ENCODE measurements at regions of chr22 and their contacts with region 1.

Region 1: DNA sequence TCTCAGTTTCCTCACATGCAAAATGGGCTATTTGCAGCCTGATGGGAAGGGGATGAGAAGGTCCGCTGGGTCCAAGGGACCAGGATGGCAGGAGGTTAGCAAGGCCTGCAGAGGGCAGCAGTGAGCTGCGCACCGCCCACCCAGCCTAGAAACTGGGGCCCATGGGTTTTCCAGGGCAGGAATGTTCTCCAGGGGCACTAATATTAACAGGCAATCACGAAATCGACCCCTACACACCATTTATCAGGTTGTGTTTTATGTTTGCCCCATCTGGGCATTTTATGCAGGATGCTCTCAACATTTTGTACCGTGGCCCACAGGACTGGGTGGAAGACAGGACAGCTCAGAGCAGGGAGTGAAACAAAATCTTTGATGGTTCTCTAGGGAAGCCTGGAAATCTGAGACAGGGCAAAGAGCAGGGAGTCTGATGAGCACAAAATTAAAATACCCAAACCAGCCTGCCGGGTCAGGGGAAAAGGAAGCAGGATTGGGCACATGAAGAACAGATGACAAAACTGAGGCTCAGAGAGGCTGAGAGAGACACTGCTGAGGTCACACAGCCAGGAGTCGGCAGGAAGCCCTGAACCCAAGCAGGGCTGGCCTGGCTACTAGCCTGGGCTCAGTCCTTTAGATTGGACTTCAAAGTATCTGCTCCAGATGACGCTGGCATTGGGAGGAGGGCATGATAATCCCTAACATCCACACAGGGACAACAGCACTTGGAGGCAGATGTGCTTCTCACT is 1.6 kb upstream of the BCR start:
- DNase-seq: peak; percentile 18 to 26
- ATAC-seq: peak; percentile 26 to 44
- H3K4me3 ChIP-seq: no peak overlapping the region
- H3K27ac ChIP-seq: peak overlapping the region in 1 of 4 donors; percentile 57
- H3K4me1 ChIP-seq: peaks cover 30 to 41% of the 10 kb centered on the region in 2 donors
- H3K27me3 ChIP-seq: no peaks in the 10 kb centered on the region
- CTCF ChIP-seq: peak; percentile 88 to 97 (median 94)
- POLR2A ChIP-seq: no peak

Region 2: DNA sequence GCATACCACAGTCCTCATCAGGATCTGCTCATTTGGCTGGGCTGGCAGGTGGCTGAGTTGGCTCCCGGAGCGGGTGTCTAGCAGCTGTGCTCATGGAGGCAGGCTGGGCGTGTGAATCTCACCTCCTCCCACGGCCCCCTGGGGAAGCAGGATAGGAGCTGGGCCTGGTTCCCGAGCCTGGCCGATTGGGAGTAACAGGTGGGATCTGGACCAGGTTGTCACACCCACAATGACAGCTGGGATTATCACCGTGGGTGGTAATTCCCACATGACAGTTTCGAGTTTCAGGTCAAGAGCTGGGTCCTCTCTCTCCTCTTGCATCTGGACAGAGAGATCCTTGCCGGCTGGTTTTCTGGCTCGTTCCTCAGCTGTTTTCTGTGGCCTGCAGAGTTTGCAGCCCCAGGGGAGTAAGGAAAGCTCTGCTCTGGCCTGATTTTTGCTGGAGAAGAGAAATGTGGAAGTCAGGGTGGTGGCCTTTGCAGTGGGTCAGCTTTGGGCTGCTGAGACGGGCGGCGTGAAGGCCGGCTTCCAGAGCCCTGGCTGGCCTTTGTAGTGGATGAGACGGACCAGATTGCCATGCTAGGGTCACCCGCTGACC is 58.6 kb after region 1 on chr22:
- in situ Hi-C with region 1: no loop called
- intact Hi-C with region 1: loop called (anchors 5 kb)
- DNase-seq: peak; percentile 66 to 68
- ATAC-seq: peak; percentile 89 to 96
- H3K4me3 ChIP-seq: no peak overlapping the region
- H3K27ac ChIP-seq: peak overlapping the region in 1 of 4 donors; percentile 23
- H3K4me1 ChIP-seq: peaks cover 28 to 29% of the 10 kb centered on the region in 2 donors
- H3K27me3 ChIP-seq: peaks cover 2 to 24% (median 10%) of the 10 kb centered on the region in 3 donors
- CTCF ChIP-seq: no peak
- POLR2A ChIP-seq: no peak

Region 3: DNA sequence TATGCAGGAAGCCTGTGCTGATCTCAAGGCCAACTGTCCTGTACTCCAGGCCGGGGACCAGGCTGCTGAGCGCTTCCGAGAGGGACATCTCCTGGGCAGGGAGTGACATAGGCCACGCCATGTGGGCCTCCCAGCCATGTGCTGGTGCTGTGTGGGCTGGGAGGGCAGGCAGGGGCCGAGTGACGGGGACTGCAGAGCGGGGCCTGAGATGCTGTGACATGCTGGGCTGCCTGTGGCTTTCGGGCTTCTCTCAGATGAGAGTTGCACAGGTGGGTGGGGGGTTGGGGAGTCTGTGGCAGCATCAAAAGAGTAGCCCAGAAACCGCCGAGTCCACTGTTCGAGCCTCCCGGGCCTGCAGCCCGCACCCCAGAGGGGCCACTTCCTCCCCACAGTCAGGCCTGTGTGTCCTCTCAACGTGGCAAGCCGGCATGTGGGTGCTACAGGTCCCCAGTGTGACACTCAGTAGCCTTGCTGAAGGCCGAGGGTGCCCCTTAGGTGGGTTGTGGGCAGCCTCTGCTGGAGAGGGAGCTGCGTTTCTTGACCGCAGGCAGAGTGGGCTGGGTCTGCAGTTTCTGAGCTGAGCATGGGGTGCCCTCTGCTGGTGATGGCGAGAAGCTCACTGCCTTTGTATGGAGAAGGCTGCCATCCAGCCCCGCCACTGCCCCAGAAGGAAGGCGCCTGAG is 102.9 kb after region 1 on chr22:
- in situ Hi-C with region 1: loop called (anchors 5 kb)
- intact Hi-C with region 1: loop called (anchors 1 kb)
- DNase-seq: peak; percentile 61 to 62
- ATAC-seq: peak; percentile 82 to 83
- H3K4me3 ChIP-seq: no peak overlapping the region
- H3K27ac ChIP-seq: no peak overlapping the region
- H3K4me1 ChIP-seq: peaks cover 0 to 4% of the 10 kb centered on the region in 2 donors
- H3K27me3 ChIP-seq: no peaks in the 10 kb centered on the region
- CTCF ChIP-seq: peak; percentile 85 to 95 (median 93)
- POLR2A ChIP-seq: no peak

Region 4: DNA sequence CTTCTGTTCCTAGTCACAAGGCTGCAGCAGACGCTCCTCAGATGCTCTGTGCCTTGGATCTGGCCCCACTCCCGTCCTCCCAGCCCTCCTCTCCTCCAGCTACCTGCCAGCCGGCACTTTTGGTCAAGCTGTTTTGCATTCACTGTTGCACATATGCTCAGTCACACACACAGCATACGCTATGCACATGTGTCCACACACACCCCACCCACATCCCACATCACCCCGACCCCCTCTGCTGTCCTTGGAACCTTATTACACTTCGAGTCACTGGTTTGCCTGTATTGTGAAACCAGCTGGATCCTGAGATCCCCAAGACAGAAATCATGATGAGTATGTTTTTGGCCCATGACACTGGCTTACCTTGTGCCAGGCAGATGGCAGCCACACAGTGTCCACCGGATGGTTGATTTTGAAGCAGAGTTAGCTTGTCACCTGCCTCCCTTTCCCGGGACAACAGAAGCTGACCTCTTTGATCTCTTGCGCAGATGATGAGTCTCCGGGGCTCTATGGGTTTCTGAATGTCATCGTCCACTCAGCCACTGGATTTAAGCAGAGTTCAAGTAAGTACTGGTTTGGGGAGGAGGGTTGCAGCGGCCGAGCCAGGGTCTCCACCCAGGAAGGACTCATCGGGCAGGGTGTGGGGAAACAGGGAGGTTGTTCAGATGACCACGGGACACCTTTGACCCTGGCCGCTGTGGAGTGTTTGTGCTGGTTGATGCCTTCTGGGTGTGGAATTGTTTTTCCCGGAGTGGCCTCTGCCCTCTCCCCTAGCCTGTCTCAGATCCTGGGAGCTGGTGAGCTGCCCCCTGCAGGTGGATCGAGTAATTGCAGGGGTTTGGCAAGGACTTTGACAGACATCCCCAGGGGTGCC is 111.4 kb after region 1 on chr22:
- in situ Hi-C with region 1: loop called in 1 of 4 experiments (anchors 5 kb)
- intact Hi-C with region 1: no loop called
- DNase-seq: peak in 1 of 2 donors; percentile 49
- ATAC-seq: peak; percentile 61 to 65
- H3K4me3 ChIP-seq: no peak overlapping the region
- H3K27ac ChIP-seq: peak overlapping the region in 1 of 4 donors; percentile 36
- H3K4me1 ChIP-seq: no peaks in the 10 kb centered on the region
- H3K27me3 ChIP-seq: no peaks in the 10 kb centered on the region
- CTCF ChIP-seq: peak; percentile 19 to 65 (median 56)
- POLR2A ChIP-seq: no peak

Region 5: GRCh38 chr22:23305922-23306374 is 127.3 kb after region 1 on chr22:
- in situ Hi-C with region 1: no loop called
- intact Hi-C with region 1: no loop called
- DNase-seq: peak; percentile 69 to 70
- ATAC-seq: peak; percentile 90 to 94
- H3K4me3 ChIP-seq: peak overlapping the region in 2 of 4 donors; percentile 30
- H3K27ac ChIP-seq: peak overlapping the region; percentile 80 to 85 (median 82)
- H3K4me1 ChIP-seq: peaks cover 8 to 23% of the 10 kb centered on the region in 2 donors
- H3K27me3 ChIP-seq: no peaks in the 10 kb centered on the region
- CTCF ChIP-seq: no peak
- POLR2A ChIP-seq: no peak

Region 6: DNA sequence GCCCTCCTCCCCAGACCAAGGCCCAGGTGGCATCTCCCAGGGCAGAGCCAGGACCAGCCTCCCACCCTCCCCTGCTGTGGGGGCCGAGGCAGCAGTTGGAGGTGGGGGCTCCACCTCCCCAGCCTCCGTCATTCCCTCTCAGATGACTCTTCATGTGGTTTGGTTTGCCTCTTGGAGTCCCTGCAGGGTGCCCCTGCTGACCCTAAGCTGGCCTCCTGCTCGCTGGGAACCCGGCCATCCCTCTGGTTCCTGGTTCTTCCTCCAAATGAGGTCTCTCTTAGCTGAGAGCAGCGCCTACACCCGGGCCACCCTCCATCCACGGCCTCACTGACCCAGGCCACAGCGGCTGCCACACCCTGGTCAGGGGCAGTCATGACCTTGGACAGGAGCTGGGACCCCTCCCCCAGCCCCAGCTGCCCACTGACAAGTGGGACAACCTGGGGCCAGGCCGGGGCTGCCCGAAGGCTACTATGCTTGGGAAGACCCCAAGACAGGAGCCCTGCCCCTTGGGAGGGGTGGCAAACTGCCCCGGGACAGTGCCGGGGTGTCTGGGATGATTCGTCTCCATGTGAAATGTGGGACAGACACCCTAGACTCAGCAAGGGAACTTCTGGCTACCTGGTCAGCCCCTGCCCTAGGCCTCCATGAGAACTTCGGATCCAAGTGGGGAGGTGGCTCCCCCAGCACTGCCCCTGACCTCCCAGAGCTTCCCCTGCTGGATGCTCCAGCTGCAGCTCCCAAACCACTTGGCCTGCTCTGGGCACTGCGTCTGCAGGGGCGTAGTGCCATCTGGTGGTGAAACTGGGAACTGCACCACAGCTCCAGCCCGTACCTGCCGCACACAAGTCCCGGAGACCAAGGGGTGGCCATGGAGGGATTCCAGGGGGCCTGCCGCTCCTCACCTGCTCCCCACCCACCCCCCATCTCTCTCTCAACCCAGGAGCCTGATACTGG is 206.9 kb after region 1 on chr22:
- in situ Hi-C with region 1: loop called in 2 of 4 experiments (anchors 25 kb)
- intact Hi-C with region 1: loop called (anchors 5 kb)
- DNase-seq: peak; percentile 46 to 62
- ATAC-seq: peak; percentile 78 to 88
- H3K4me3 ChIP-seq: no peak overlapping the region
- H3K27ac ChIP-seq: no peak overlapping the region
- H3K4me1 ChIP-seq: no peaks in the 10 kb centered on the region
- H3K27me3 ChIP-seq: no peaks in the 10 kb centered on the region
- CTCF ChIP-seq: peak; percentile 91 to 99 (median 96)
- POLR2A ChIP-seq: no peak

Measured in gastrocnemius medialis (tissue), 4 donors.